OCI-LY7 (cell line): ENCODE measurements at regions of chr3 and their contacts with region 1.

Region 1: DNA sequence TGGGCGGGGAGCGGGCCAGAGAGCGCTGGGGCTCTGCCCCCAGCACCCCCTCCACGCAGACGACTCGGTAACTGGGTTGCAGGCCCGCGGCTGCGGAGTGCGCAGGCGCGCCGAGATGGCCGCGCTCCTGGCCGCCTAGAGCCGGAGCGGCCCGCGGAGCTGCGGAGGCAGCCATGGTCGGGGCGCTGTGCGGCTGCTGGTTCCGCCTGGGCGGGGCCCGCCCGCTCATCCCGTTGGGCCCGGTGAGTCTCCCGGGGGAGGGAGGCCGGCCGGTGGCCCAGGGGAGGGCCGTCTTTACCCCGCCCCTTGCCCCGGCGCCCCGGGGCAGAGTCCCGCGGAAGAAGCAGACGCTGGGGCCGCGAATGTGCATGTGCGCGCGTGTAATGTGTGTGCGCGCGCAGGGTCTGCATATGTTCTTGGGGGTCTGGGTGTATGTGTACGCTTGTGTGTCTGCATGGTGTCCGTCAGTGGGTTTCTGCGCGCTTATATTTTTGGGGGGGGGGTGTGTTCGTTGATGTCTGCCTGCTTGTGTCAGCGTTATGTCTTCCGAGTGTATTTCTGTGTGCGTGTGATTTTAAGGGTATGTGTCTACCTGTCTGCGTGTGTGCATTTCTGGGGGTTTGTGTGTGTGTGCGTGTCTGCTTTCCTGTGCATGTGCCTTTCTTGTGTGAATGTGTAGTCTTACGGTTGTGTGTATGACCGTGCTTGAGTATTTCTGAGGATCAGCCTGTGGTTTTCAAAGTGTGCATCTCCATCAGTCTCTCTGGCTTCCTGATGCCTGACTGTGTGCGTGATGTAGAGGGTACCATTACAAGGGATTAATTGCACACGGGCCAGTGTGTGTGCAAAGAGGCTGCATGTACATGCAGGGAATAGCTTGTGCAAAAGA is at the start of gene ABHD14A:
- DNase-seq: peak; percentile 72
- H3K4me3 ChIP-seq: peak within 1 kb of the TSS; percentile 76
- H3K27ac ChIP-seq: peak within 1 kb of the TSS; percentile 30
- H3K4me1 ChIP-seq: peaks cover 30% of the 10 kb centered on the region
- CTCF ChIP-seq: no peak
- total RNA-seq, gene ABHD14A: 3.7 and 7.5 TPM in 2 replicates

Region 2: DNA sequence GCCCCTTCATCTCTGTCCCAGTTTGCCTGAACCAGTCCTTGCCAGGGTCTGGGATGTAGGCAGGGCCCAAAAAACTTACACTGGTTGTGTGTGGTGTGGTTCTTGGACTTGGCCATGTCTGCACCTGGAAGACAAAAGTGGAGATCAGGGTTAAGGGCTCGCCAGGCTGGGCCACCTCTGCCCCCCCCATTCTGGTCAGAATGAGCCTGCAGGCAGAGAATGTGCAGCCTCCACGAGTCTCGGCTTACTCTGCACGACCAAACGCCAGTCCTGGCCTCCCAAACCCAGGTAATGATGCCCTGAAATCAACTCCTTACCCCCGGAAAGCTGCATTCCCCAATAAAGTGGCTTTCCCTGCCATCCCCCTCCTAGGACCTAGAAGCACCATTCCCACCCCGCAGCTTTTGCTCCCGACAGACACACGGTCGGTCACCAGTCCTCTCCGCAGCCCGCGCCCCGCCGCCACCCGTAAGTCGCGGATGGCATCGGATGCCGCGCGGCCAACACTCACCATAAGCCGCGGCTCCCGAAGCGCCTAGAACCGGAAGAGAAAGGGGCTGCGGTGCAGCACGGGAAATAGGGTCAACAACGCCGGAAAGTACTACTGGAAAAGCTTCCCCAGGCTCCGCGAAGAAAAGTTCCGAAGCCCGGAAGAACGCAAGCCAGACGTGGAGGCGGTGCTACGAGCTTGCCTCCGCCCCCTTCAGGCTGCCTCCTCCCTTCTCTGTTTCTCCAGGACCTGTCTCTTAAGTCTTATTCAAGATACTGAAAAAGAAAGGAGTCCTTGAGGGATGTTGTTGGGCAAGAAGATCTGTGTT is 20.3 kb after region 1 on chr3 and contains the start of gene RPL29:
- CTCF ChIA-PET with region 1: no interaction called
- POLR2A ChIA-PET with region 1: interaction called, 4 read pairs
- intact Hi-C with region 1: loop called (anchors 2 kb)
- DNase-seq: peak; percentile 96
- H3K4me3 ChIP-seq: peak within 1 kb of the TSS; percentile 96
- H3K27ac ChIP-seq: peak within 1 kb of the TSS; percentile 60
- H3K4me1 ChIP-seq: peaks cover 29% of the 10 kb centered on the region
- CTCF ChIP-seq: no peak
- total RNA-seq, gene RPL29: 1,739 and 1,781 TPM in 2 replicates